ENCODE measurements at regions of chr9 and their contacts with region 1.

Region 1: GRCh38 chr9:93082841-93083411 is 13.1 kb upstream of the CARD19 start:
- DNase-seq: peak in 3 of 5 donors; percentile 15 to 47 (median 22)
- ATAC-seq: peak in 1 of 4 donors; percentile 22
- H3K4me3 ChIP-seq: no peak overlapping the region
- H3K27ac ChIP-seq: peak overlapping the region in 1 of 12 donors; percentile 18
- H3K4me1 ChIP-seq: peaks cover 0 to 14% (median 0%) of the 10 kb centered on the region in 12 donors
- H3K27me3 ChIP-seq: no peaks in the 10 kb centered on the region
- CTCF ChIP-seq: no peak
- POLR2A ChIP-seq: no peak

Region 2: DNA sequence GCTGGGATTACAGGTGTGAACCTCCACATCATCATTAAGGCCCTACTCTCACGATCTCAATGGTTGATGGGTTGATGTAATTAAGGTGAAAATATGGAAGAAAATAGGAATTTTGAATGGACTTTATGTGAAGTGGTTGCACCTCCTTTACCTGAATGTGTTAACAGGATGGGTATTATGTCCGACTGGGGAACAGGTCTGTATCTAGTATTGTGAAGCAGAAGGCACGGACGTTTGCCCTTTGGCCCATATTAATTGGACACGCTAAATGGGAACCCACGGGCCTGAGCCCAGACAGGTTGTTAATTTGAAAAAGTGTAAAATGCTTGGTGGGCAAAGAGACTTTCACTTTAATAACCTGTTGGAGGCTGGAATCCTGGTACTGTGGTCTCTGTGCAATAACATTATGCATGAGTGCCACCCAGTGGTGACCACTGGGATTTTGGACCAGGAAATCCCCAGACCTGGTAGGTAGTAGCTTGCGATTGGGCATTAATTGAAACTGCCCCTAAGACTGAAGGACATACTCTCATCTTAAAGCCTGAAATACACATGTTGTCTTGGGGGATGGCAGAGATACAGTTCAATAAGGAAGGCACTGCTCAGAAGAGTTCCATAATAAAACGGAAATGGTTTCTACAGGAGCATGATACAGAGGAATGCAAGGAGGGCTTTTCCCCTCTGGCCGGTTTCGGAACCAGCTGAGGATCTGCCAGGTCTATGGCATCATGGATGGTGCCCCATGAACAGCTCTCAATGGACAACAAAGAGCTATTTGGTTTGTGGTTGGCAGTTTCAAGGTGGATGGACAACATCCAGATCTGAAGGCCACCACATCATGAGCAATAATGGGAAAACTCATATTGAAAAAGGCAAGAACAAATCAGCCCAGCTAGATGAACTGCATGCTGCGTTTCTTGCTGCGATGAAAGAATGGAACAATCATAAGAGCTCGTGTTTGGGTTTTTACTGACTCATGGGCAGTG is 292.1 kb before region 1 on chr9:
- intact Hi-C with region 1: no loop called
- DNase-seq: peak; percentile 68 to 83 (median 75)
- ATAC-seq: peak; percentile 82 to 97 (median 95)
- H3K4me3 ChIP-seq: no peak overlapping the region
- H3K27ac ChIP-seq: no peak overlapping the region
- H3K4me1 ChIP-seq: peaks cover 0 to 7% (median 0%) of the 10 kb centered on the region in 12 donors
- H3K27me3 ChIP-seq: peaks cover 0 to 2% (median 0%) of the 10 kb centered on the region in 9 donors
- CTCF ChIP-seq: peak; percentile 72 to 87 (median 83)
- POLR2A ChIP-seq: no peak

Region 3: GRCh38 chr9:92895812-92896436 is 187.0 kb before region 1 on chr9:
- intact Hi-C with region 1: no loop called
- DNase-seq: no peak
- ATAC-seq: no peak
- H3K4me3 ChIP-seq: no peak overlapping the region
- H3K27ac ChIP-seq: no peak overlapping the region
- H3K4me1 ChIP-seq: no peaks in the 10 kb centered on the region
- H3K27me3 ChIP-seq: no peaks in the 10 kb centered on the region
- CTCF ChIP-seq: no peak
- POLR2A ChIP-seq: no peak

Region 4: DNA sequence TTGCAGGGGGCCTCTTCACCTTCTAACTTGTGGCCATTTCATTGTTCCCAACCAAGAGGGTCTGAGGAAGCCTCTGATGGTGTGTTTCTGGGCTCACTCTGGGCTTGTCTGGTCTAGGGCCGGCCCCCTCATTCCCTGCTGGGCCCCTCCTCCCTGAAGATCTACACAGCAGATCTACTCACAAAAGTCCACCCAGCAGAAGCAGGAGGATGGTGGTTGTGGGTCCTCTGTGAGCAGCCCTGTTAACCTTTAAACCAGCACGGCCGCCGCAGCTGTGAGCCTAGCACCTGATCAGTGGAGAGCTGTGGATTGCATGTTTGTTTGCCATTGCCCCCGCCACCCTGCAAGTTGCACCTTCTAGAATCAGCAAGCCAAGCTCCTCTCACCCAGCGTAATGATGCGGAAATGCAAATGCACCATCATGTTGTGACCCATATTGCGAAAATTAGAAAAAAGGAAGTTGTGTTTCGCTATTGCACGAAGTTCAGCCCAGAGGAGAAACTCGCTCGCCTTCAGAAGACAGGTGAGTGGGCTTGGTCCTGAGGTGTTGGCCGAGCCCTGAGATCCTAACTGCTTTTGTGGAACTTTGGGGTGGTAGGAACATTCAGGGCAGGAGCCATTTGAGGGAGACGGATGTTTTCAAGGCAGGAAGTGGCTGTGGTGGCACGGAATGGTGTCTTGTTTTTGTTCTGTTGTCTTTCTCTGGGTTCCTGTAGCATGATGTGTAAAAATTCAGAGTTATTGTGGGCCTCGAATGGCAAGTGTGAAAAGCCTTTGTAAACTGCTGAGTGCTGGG is 118.9 kb before region 1 on chr9:
- intact Hi-C with region 1: loop called in 1 of 10 experiments (anchors 10 kb)
- DNase-seq: peak in 1 of 5 donors; percentile 43
- ATAC-seq: peak in 3 of 4 donors; percentile 39 to 47 (median 47)
- H3K4me3 ChIP-seq: peak overlapping the region in 9 of 12 donors; percentile 22 to 77 (median 38)
- H3K27ac ChIP-seq: peak overlapping the region in 6 of 12 donors; percentile 24 to 97 (median 45)
- H3K4me1 ChIP-seq: peaks cover 0 to 51% (median 0%) of the 10 kb centered on the region in 12 donors
- H3K27me3 ChIP-seq: peaks cover 0 to 6% (median 0%) of the 10 kb centered on the region in 9 donors
- CTCF ChIP-seq: no peak
- POLR2A ChIP-seq: no peak

Region 5: GRCh38 chr9:93013856-93014582 is 68.9 kb before region 1 on chr9:
- intact Hi-C with region 1: loop called in 1 of 10 experiments (anchors 10 kb)
- DNase-seq: no peak
- ATAC-seq: no peak
- H3K4me3 ChIP-seq: no peak overlapping the region
- H3K27ac ChIP-seq: no peak overlapping the region
- H3K4me1 ChIP-seq: no peaks in the 10 kb centered on the region
- H3K27me3 ChIP-seq: no peaks in the 10 kb centered on the region
- CTCF ChIP-seq: no peak
- POLR2A ChIP-seq: no peak

Region 6: DNA sequence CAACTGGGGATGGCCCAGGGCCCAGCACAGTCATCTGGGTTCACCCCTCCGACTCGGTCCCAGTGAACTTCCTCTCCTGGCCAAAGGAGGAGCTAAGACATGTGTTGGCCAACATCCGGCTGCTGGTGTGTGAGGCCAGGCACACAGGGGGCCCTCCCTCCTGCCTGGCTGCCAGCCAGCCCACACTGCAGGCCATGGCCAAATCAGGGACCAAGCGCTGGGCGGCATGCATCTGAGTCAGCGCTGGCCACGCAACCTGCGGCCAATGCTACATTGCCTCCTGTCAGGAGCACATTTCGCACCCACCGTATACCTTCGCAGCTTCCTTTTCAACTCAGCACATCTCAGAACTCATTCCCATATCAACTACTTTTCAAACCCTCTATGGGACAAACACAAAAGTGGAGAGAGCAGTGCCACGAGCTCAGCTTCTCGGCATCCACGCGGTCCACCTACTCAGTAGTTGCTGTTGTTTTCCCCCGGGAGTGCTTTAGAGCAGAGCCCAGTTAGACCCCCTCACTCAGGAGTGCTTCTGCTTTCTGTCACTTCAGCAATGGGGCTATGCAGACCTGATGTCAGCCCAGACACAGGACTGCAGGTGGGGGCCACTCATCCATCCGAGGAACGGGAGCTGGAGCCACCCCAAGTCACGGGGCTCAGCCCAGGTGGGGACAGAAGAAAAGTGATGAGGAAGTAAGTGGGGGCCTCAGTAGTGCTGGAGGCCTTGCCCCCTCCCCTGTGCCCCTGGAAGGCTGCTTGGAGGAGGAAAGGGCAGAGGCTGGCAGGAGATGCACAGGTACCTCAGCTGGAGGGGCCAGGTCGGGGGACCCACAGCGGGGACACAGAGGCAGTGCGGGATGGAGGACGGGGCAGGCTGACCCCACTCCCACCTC is 37.3 kb after region 1 on chr9:
- intact Hi-C with region 1: no loop called
- DNase-seq: peak; percentile 91 to 96 (median 95)
- ATAC-seq: peak; percentile 88 to 95 (median 90)
- H3K4me3 ChIP-seq: no peak overlapping the region
- H3K27ac ChIP-seq: peak overlapping the region in 10 of 12 donors; percentile 26 to 90 (median 56)
- H3K4me1 ChIP-seq: peaks cover 0 to 52% (median 18%) of the 10 kb centered on the region in 12 donors
- H3K27me3 ChIP-seq: no peaks in the 10 kb centered on the region
- CTCF ChIP-seq: peak in 11 of 12 donors; percentile 10 to 58 (median 38)
- POLR2A ChIP-seq: no peak